ENCODE measurements at regions of chr10 and their contacts with region 1.

Region 1: DNA sequence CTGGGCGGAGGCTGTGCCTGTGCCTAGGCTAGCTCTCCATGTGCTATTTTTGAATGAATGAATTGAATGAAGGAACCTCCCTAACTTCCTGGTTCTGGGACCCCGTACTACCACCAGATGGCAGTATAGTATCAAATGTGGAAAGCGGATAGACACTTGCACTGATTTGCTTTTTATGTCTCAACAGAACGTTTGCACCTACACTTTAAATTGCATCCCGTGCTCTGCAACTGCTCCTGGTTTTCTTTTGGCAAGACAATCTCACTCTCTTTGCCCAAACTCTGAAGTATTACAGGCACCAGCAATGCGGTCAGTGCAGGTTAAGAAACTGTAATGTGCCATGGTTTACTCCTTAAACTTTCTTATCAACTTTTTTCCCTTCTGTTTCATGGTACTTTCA is 6.5 kb downstream of the FZD8 start:
- DNase-seq: no peak
- ATAC-seq: peak; percentile 67

Region 2: DNA sequence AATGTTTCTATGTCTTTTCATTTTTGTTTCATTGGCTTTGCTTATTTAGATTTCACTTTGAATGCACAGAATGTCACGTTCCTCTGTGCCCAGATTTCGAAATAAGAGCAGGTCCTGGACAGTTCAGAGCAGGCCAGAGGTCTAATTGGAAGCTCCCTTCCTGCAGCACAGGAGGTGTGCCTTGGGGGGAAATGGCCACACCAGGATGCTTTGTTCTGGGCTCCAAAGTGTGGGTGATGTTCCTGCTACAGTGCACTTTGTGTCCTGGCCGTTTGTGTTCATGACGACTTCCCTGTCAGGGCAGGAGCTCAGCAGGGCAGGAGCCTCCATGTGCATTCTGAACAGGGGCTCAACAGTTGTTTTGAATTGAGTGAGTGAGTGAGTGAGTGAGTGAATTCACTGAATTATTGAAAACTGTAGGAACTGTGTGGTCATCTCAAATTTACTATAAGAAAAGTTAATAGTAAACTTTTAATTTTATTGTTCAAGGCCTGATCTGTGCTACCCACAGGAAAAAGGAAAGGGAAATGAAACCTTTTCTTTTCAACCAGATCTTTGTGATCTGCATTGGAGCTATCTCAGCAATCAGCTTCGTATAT is 140.0 kb before region 1 on chr10:
- intact Hi-C with region 1: no loop called
- DNase-seq: no peak
- ATAC-seq: peak; percentile 62

Region 3: DNA sequence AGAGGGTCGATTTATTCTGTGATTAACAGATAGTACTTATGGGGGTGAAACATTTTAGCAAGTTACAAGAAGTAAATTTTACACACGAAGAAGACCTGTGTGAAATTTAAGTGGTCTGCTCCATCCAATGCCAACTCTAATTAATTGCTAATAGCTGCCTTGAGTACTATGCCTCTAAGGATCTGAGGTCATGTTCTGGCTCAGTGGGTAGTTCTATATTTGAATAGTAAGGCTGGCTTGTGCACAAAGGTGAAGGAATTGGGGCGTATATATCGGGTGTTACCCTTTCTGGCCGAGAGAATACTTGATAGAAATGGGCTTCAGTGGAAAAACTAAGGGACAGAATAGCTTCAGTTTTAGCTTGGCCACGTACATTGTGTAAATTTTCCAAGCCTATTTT is 1144.6 kb after region 1 on chr10:
- intact Hi-C with region 1: loop called (anchors 5 kb)
- DNase-seq: no peak
- ATAC-seq: peak; percentile 54

Region 4: DNA sequence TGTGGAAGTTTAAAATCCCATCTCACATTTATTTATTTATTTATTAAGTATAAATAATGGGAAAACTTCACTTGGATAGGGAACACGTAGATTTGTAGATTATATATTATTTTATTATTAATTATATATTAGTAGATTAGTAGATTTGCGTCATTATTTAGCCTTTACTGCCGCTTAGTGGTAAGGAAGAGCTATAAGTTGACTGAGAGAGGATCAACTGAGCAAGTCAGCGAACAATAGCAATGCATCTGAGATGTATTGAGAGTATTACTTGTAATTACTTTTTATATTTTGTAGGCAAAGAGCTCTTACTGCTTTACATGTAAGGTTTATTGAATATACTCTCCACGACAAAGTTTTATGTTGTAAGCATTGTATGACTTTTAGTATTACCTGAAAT is 1245.3 kb after region 1 on chr10:
- intact Hi-C with region 1: loop called (anchors 5 kb)
- DNase-seq: no peak
- ATAC-seq: no peak